Vagina (tissue), 2 donors: ENCODE measurements at regions of chr6 and their contacts with region 1.

Region 1: DNA sequence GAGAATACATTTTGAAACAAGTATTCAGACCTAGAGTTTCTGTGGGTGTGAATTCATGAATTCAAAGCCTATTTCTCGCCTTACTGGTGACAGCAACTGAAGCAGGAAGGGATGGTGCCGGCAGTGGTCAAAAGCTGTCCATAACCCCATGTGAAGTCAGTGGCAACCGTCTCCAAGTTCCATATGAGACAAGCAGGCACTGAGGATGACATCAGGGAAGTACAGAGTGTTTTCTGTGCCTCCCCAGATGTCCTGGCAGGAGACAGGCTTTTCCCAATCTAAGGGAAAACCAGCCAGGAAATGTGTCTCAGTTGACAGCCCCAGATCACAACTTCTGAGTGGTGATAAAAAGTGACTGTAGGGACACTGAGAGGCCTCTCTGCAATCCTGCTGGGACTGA is 66.6 kb downstream of the HIVEP2 start:
- DNase-seq: no peak
- H3K4me3 ChIP-seq: no peak overlapping the region
- H3K27ac ChIP-seq: no peak overlapping the region
- H3K4me1 ChIP-seq: no peaks in the 10 kb centered on the region
- H3K27me3 ChIP-seq: no peaks in the 10 kb centered on the region
- CTCF ChIP-seq: no peak
- POLR2A ChIP-seq: no peak

Region 2: GRCh38 chr6:142631517-142632385 is 246.7 kb before region 1 on chr6:
- intact Hi-C with region 1: no loop called
- DNase-seq: no peak
- H3K4me3 ChIP-seq: no peak overlapping the region
- H3K27ac ChIP-seq: no peak overlapping the region
- H3K4me1 ChIP-seq: no peaks in the 10 kb centered on the region
- H3K27me3 ChIP-seq: no peaks in the 10 kb centered on the region
- CTCF ChIP-seq: no peak
- POLR2A ChIP-seq: no peak

Region 3: GRCh38 chr6:142966294-142966693 is 87.9 kb after region 1 on chr6:
- intact Hi-C with region 1: loop called (anchors 5 kb)
- DNase-seq: no peak
- H3K4me3 ChIP-seq: no peak overlapping the region
- H3K27ac ChIP-seq: no peak overlapping the region
- H3K4me1 ChIP-seq: no peaks in the 10 kb centered on the region
- H3K27me3 ChIP-seq: no peaks in the 10 kb centered on the region
- CTCF ChIP-seq: no peak
- POLR2A ChIP-seq: no peak